ENCODE measurements at regions of chrX and their contacts with region 1.

Region 1: GRCh38 chrX:137178392-137178791 is 144.6 kb upstream of the GPR101 start:
- DNase-seq: no peak
- H3K4me3 Mint-ChIP-seq: no peak overlapping the region
- H3K27ac Mint-ChIP-seq: no peak overlapping the region
- H3K4me1 Mint-ChIP-seq: no peaks in the 10 kb centered on the region
- H3K27me3 Mint-ChIP-seq: no peaks in the 10 kb centered on the region

Region 2: DNA sequence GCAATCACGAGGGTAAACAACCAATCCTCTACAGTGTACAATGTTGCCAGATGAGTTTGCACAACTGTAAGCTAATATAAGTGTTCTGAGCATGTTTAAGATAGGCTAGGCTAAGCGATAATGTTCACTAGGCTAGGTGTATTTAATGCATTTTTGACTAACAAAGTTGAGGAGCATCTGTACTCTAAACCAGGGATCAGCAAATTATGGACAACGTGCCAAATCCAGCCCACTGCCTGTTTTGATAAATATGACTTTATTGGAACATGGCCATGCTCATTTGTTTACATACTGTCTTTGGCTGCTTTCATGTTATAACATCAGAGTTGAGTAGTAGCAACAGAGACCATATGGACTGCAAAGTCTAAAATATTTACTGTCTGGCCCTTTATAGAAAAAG is 351.4 kb before region 1 on chrX:
- CTCF ChIA-PET with region 1: no interaction called
- intact Hi-C with region 1: no loop called
- DNase-seq: no peak
- H3K4me3 Mint-ChIP-seq: no peak overlapping the region
- H3K27ac Mint-ChIP-seq: no peak overlapping the region
- H3K4me1 Mint-ChIP-seq: no peaks in the 10 kb centered on the region
- H3K27me3 Mint-ChIP-seq: no peaks in the 10 kb centered on the region

Region 3: DNA sequence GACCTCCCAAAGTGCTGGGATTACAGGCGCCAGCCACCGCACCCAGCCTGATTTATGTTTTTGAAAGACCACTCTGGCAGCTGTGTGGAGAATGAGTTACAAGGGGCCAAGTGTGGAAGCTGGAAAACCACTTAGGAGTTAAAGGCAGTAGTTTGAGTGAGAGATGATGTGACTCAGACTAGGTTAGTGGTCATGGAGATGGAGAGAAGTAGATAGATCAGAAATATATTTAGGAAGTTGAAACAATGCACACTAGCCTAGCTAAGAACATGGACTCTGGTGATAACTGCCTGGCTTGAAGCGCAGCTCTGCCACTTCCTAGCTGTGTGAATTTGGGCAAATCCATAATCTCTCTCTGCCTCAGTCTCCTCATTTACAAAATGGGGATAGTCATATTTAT is 286.0 kb before region 1 on chrX:
- CTCF ChIA-PET with region 1: no interaction called
- intact Hi-C with region 1: no loop called
- DNase-seq: no peak
- H3K4me3 Mint-ChIP-seq: no peak overlapping the region
- H3K27ac Mint-ChIP-seq: no peak overlapping the region
- H3K4me1 Mint-ChIP-seq: no peaks in the 10 kb centered on the region
- H3K27me3 Mint-ChIP-seq: no peaks in the 10 kb centered on the region

Region 4: DNA sequence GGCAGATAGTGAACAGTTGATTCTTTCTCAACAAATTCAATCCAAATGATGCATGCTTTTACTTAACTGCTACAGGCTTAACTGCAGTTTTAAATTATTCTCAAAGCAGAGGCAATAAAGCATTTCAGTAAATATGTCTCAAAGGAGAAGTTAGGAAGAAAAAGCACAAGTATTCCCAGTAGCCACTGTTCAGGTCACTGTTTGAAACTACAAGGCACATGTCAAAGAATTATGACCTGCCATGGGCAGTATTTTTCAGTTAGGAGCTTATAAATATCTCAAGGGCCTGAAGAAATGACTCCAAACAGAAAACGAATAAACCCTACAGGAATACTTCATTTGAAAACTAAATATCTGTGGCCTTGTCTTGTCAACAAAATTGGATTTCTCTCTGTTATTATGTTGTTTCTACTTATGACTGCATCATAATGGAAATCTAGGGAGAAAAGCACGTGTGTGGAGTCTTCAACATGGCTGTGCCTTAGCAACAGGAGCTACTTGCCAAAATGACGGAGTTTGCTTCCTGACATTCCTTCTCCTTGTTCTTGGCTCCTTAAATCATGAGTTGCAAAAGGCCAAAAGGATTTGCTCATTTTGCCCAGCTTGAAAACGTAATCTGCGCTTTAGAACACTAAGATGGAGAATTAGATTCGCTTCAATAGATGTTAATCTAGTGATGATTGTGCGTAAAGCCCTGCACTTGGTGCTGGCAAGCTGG is 77.0 kb before region 1 on chrX:
- CTCF ChIA-PET with region 1: no interaction called
- intact Hi-C with region 1: loop called (anchors 10 kb)
- DNase-seq: no peak
- H3K4me3 Mint-ChIP-seq: no peak overlapping the region
- H3K27ac Mint-ChIP-seq: no peak overlapping the region
- H3K4me1 Mint-ChIP-seq: no peaks in the 10 kb centered on the region
- H3K27me3 Mint-ChIP-seq: no peaks in the 10 kb centered on the region